ENCODE measurements at regions of chr5 and their contacts with region 1.

Region 1: DNA sequence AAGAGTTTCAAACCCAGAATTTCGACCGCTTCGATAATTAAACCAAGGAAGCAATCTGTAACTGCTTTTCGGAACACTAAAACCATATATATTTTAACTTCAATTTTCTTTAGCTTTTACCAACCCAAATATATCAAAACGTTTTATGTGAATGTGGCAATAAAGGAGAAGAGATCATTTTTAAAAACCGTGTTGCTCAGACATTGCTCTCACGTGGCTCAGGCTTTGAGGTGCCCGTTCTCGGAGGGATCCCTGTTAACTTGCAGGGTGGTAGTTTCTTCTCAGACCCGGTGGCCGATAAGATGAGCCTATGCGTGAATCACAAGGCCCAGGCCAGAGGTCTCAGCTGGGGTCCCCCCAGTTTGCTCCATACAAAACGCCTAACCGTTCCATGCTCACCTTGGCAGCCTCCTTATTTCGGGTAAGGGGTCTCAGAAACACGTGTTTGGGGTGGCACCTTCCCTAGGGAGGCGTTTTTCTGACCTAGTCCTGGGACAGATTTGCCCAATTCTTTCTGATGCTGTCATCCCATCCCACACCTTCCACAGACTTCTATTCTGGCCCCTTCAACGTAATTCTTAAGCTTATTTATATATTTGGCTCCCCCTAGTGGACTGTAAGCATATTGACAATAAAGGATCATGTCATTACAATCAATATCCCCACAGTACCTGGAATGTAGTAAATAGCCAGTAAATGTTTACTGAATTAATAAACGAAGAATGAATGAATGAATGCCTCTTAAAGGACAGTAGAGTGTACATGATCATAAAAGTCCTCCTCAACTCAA is 48.1 kb downstream of the THBS4 start:
- DNase-seq: peak; percentile 37 to 72
- H3K4me3 ChIP-seq: peak overlapping the region; percentile 53; the same call in 1 of the 2 replicates
- H3K27ac ChIP-seq: no peak overlapping the region
- H3K4me1 ChIP-seq: peaks cover 7% of the 10 kb centered on the region; the same call in 1 of the 2 replicates
- H3K27me3 ChIP-seq: no peaks in the 10 kb centered on the region
- CTCF ChIP-seq: peak; percentile 82

Region 2: GRCh38 chr5:78472469-78473106 is 1610.7 kb before region 1 on chr5:
- CTCF ChIA-PET with region 1: no interaction called
- POLR2A ChIA-PET with region 1: interaction called, 19 read pairs
- intact Hi-C with region 1: no loop called
- DNase-seq: no peak
- H3K4me3 ChIP-seq: no peak overlapping the region
- H3K27ac ChIP-seq: no peak overlapping the region
- H3K4me1 ChIP-seq: no peaks in the 10 kb centered on the region
- H3K27me3 ChIP-seq: no peaks in the 10 kb centered on the region
- CTCF ChIP-seq: peak; percentile 66

Region 3: GRCh38 chr5:79133657-79134451 is 949.4 kb before region 1 on chr5:
- CTCF ChIA-PET with region 1: interaction called, 10 read pairs
- POLR2A ChIA-PET with region 1: no interaction called
- intact Hi-C with region 1: loop called (anchors 1 kb)
- DNase-seq: peak; percentile 61 to 66
- H3K4me3 ChIP-seq: peak overlapping the region; percentile 30; the same call in 1 of the 2 replicates
- H3K27ac ChIP-seq: peak overlapping the region; percentile 82
- H3K4me1 ChIP-seq: peaks cover 15% of the 10 kb centered on the region
- H3K27me3 ChIP-seq: no peaks in the 10 kb centered on the region
- CTCF ChIP-seq: peak; percentile 78

Region 4: GRCh38 chr5:79464695-79465332 is 618.5 kb before region 1 on chr5:
- CTCF ChIA-PET with region 1: no interaction called
- POLR2A ChIA-PET with region 1: no interaction called
- intact Hi-C with region 1: loop called (anchors 2 kb)
- DNase-seq: no peak
- H3K4me3 ChIP-seq: no peak overlapping the region
- H3K27ac ChIP-seq: no peak overlapping the region
- H3K4me1 ChIP-seq: no peaks in the 10 kb centered on the region
- H3K27me3 ChIP-seq: no peaks in the 10 kb centered on the region
- CTCF ChIP-seq: peak; percentile 78

Region 5: GRCh38 chr5:79702606-79703382 is 380.5 kb before region 1 on chr5:
- CTCF ChIA-PET with region 1: interaction called, 4 read pairs
- POLR2A ChIA-PET with region 1: no interaction called
- intact Hi-C with region 1: loop called (anchors 2 kb)
- DNase-seq: peak in 1 of 2 experiments; percentile 65
- H3K4me3 ChIP-seq: no peak overlapping the region
- H3K27ac ChIP-seq: peak overlapping the region; percentile 36
- H3K4me1 ChIP-seq: peaks cover 56% of the 10 kb centered on the region
- H3K27me3 ChIP-seq: no peaks in the 10 kb centered on the region
- CTCF ChIP-seq: peak; percentile 65

Region 6: DNA sequence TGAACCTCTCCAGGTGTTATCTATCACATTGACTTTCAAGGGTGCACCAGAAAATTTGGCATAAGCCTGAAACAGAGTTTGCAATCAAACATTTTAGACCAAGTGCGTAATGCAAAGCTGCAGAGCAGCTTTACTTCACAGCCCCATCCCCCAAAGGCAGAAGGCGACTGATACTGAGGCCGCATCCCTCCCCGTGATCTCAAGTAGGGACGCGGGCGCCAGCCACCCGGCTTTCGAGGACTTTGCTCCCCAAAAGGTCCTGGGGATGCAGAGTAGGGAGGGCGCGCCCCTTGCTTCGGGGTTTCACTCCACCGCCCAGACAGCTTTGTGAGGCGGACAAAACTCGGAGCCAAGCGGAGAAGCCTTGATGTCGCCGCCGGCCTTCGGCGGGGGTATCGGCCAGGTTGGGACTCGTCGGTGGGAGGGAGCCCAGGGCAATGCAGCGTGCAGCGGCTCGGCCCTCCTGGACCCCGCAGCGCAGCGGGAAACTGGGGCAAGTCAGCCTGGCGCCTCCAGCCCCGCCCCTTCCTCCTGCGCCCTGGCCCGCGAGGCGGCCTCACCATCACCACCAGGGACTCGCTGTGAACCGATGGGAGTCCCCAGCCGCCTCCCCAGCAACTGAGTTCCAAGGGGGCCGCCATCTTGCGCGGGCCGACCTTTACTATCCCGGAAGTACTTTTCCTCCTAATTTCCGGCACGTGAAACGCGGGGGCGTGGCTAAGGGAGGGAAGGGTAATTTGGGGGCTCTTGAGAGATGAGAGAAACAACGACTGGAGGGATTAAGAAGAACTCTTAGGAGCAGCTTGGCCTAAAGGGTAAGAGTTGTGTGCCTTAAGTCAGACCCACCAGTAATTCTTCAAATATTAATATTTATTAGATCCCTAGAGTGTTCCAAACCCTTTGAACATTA is 92.4 kb before region 1 on chr5 and contains the start of gene MTX3:
- CTCF ChIA-PET with region 1: interaction called, 6 read pairs
- POLR2A ChIA-PET with region 1: no interaction called
- intact Hi-C with region 1: loop called (anchors 1 kb)
- DNase-seq: peak; percentile 75 to 77
- H3K4me3 ChIP-seq: peak within 1 kb of the TSS; percentile 72
- H3K27ac ChIP-seq: peak within 1 kb of the TSS; percentile 81
- H3K4me1 ChIP-seq: peaks cover 23% of the 10 kb centered on the region
- H3K27me3 ChIP-seq: no peaks in the 10 kb centered on the region
- CTCF ChIP-seq: no peak
- total RNA-seq, gene MTX3: 20.9 and 22.8 TPM in 2 replicates